Right cardiac atrium (tissue), 5 donors: ENCODE measurements at regions of chr12 and their contacts with region 1.

Region 1: GRCh38 chr12:117836999-117837736 is 131.6 kb downstream of the KSR2 start:
- DNase-seq: peak; percentile 67 to 88 (median 86)
- ATAC-seq: peak; percentile 51 to 69
- H3K4me3 ChIP-seq: no peak overlapping the region
- H3K27ac ChIP-seq: no peak overlapping the region
- H3K4me1 ChIP-seq: no peaks in the 10 kb centered on the region
- H3K27me3 ChIP-seq: no peaks in the 10 kb centered on the region

Region 2: GRCh38 chr12:117212563-117213190 is 624.5 kb before region 1 on chr12:
- intact Hi-C with region 1: loop called in 3 of 4 experiments (anchors 5 kb)
- DNase-seq: peak; percentile 66 to 86 (median 74)
- ATAC-seq: peak; percentile 87 to 88
- H3K4me3 ChIP-seq: no peak overlapping the region
- H3K27ac ChIP-seq: no peak overlapping the region
- H3K4me1 ChIP-seq: no peaks in the 10 kb centered on the region
- H3K27me3 ChIP-seq: no peaks in the 10 kb centered on the region

Region 3: GRCh38 chr12:117236456-117237001 is 600.6 kb before region 1 on chr12:
- intact Hi-C with region 1: loop called in 3 of 4 experiments (anchors 5 kb)
- DNase-seq: peak; percentile 76 to 92 (median 89)
- ATAC-seq: peak; percentile 43 to 68
- H3K4me3 ChIP-seq: no peak overlapping the region
- H3K27ac ChIP-seq: no peak overlapping the region
- H3K4me1 ChIP-seq: no peaks in the 10 kb centered on the region
- H3K27me3 ChIP-seq: no peaks in the 10 kb centered on the region

Region 4: DNA sequence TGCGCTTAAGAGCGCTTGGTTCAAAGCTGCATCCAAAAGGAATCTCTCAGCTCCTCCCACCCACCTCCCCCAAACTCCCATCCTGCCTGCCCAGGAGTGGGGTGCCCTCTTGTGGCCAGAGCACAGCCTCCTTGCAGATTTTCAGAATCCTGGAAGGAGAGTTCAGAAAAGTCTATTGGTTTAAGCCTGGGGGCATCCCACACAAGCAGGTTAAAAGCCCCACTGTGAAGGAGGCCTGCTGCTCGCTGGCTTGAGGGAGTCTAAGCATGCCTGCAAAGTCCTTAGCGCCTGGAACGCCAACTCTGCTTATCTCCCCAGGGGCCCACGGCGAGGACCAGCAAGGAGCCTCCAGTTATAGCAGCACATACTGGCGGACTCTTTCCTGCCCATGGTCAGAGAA is 165.4 kb before region 1 on chr12:
- intact Hi-C with region 1: loop called in 1 of 4 experiments (anchors 5 kb)
- DNase-seq: peak; percentile 23 to 64 (median 43)
- ATAC-seq: no peak
- H3K4me3 ChIP-seq: no peak overlapping the region
- H3K27ac ChIP-seq: no peak overlapping the region
- H3K4me1 ChIP-seq: no peaks in the 10 kb centered on the region
- H3K27me3 ChIP-seq: no peaks in the 10 kb centered on the region

Region 5: DNA sequence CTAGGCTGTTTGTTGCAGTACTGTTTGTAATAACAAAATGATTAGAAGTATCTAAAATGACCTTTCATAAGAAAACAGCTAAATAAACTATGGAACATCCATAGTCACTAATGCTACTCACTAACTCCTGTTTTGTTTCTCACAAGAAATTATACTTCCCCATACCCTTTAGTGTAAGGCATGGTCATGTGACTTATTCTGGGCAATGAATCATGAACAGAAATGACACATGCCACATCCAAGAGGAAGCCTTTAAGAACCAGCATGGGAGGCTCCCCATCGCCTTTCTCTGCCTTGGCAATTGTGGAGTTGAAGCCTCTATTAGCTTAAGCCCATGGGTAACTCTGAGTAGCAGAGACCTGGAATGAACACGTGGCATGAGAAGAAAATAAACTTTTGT is 82.3 kb after region 1 on chr12:
- intact Hi-C with region 1: no loop called
- DNase-seq: no peak
- ATAC-seq: no peak
- H3K4me3 ChIP-seq: no peak overlapping the region
- H3K27ac ChIP-seq: no peak overlapping the region
- H3K4me1 ChIP-seq: no peaks in the 10 kb centered on the region
- H3K27me3 ChIP-seq: no peaks in the 10 kb centered on the region